ENCODE measurements at regions of chrX and their contacts with region 1.

Region 1: DNA sequence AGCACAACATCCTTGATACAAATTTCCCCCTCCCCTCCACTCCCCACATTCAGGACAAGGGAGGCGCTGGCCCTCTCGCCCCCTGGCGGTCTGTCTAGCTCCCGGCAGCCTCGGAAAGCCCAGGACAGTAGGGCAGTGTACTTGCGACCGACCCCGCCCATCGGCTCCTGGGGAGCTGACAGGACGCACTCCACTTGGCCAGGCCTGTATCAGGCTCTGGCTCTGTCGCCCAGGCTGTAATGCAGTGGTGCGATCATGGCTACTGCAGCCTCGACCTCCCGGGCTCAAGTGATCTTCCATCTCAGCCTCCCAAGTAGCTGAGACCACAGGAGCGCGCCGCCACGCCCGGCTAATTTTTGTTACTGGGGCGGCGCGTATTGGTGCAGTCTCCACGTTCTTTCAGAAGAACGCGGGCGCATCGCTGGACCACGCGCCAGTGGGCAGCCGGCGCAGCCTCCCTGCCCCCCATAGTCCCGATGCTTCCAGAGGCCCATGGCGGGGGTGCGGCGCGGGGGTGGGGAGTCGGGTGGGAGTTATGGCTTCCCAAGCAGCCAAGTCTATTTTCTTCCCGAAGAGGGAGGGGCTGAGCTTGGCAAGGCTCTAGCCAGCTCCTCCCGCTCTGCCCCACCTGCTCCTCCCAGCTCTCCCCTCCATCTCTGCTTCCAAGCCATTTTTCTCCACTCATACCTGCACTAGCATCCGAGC is 7.8 kb upstream of the AKAP14 start:
- DNase-seq: peak; percentile 40 to 54 (median 50)
- H3K4me3 ChIP-seq: peak overlapping the region in 1 of 2 donors; percentile 27
- H3K4me3 Mint-ChIP-seq: peak overlapping the region in 7 of 8 donors; percentile 17 to 71 (median 64)
- H3K27ac ChIP-seq: no peak overlapping the region
- H3K27ac Mint-ChIP-seq: no peak overlapping the region
- H3K4me1 ChIP-seq: peaks cover 9% of the 10 kb centered on the region
- H3K4me1 Mint-ChIP-seq: peaks cover 3 to 18% (median 7%) of the 10 kb centered on the region in 4 donors
- H3K27me3 ChIP-seq: no peaks in the 10 kb centered on the region
- H3K27me3 Mint-ChIP-seq: peaks cover 0 to 1% of the 10 kb centered on the region in 2 donors

Region 2: DNA sequence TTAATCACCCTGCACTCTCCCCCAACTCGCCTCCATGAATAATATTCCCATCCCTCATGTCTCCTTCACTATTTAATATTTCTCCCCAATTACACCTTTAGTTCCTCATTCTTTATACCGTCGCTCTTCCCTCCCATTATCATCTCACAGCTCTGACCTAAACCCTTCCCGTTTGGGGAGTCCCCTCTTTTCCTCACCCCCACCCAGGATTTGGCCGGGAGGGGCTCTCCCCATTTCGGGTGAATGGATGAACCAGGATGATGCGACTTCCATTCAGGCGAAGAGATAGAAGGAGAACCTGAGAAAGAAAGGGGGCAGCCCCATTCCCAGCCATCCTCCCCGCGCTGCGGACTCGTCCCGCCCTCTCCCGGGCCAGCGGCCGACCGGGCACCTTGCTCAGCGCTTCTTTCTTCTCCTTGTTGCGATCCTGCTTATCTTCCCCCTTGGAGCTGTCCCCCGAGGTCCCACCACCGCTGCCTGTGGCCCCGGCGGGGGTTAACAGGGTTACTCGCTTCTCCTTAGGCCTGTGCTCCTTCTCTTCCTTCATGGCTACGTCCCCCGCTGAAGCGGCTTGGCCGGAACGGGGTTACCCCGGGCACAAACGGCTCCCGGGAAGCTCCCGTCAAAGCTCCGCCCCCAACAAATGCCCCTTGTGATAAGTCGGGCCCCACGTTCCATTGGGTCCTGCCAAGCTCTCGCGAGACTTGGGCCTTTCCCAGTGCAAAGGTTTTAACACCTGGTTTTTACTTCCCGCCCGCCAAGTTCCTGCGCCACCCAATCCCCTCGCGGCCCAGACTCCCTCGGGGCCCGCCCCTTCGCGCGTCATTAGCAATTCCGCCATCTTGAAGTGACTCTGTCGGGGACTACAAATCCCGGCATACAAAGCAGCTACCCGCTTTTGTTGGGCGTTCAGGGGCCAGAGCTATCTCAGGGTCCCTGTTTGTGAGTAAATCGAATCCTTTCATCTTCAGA is 35.2 kb before region 1 on chrX and contains the start of gene UPF3B:
- CTCF ChIA-PET with region 1: interaction called, 5 read pairs
- POLR2A ChIA-PET with region 1: interaction called, 3 read pairs
- intact Hi-C with region 1: loop called (anchors 5 kb)
- DNase-seq: peak; percentile 88 to 98 (median 94)
- H3K4me3 ChIP-seq: peak within 1 kb of the TSS; percentile 54 to 82
- H3K4me3 Mint-ChIP-seq: peak within 1 kb of the TSS; percentile 96 to 100 (median 99)
- H3K27ac ChIP-seq: peak within 1 kb of the TSS; percentile 95
- H3K27ac Mint-ChIP-seq: peak within 1 kb of the TSS; percentile 92 to 100 (median 99)
- H3K4me1 ChIP-seq: peaks cover 10% of the 10 kb centered on the region
- H3K4me1 Mint-ChIP-seq: peaks cover 10 to 17% (median 14%) of the 10 kb centered on the region in 4 donors
- H3K27me3 ChIP-seq: no peaks in the 10 kb centered on the region
- H3K27me3 Mint-ChIP-seq: no peaks in the 10 kb centered on the region
- total RNA-seq, gene UPF3B: 11.1 to 12.1 TPM